Right ventricle myocardium superior (tissue), 1 donor: ENCODE measurements at regions of chr4 and their contacts with region 1.

Region 1: GRCh38 chr4:139825523-139826014 is 159.9 kb downstream of the MGST2 start:
- DNase-seq: no peak
- ATAC-seq: peak; percentile 66

Region 2: GRCh38 chr4:139761461-139761860 is 64.1 kb before region 1 on chr4:
- intact Hi-C with region 1: loop called (anchors 10 kb)
- DNase-seq: no peak
- ATAC-seq: no peak

Region 3: GRCh38 chr4:140071806-140072205 is 246.2 kb after region 1 on chr4:
- intact Hi-C with region 1: no loop called
- DNase-seq: peak; percentile 49
- ATAC-seq: peak; percentile 60